Common myeloid progenitor, CD34-positive (primary cell): ENCODE measurements at regions of chr12 and their contacts with region 1.

Region 1: GRCh38 chr12:57124259-57124877 is 3.9 kb upstream of the LRP1 start:
- DNase-seq: peak; percentile 72 to 87 (median 82)
- H3K4me3 ChIP-seq: no peak overlapping the region
- H3K27ac ChIP-seq: no peak overlapping the region
- H3K4me1 ChIP-seq: peaks cover 0 to 21% (median 18%) of the 10 kb centered on the region in 4 experiments
- H3K27me3 ChIP-seq: peaks cover 0 to 35% (median 11%) of the 10 kb centered on the region in 5 experiments

Region 2: DNA sequence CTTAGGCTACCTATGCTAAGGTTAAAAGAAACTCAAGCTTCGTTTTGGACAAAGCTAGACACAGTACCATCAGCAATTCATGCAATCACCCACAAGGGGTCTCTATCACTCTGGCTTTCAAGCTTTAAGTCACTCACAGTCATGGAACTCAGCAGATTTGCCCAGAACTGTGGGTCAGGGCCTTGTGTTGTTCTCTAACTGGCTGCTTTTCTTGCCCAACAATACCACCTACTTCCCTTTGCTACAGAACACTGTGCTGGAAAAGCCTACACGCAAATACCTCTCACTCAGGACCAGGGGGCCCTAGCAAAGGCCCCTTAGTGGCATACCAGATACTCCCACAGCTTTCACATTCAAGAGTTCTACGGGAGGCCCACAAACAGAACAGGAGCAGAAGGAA is 54.8 kb before region 1 on chr12:
- CTCF ChIA-PET with region 1: interaction called, 25 read pairs
- POLR2A ChIA-PET with region 1: no interaction called
- DNase-seq: peak; percentile 89 to 94 (median 93)
- H3K4me3 ChIP-seq: no peak overlapping the region
- H3K27ac ChIP-seq: peak overlapping the region in 1 of 2 experiments; percentile 68
- H3K4me1 ChIP-seq: peaks cover 0 to 9% (median 6%) of the 10 kb centered on the region in 4 experiments
- H3K27me3 ChIP-seq: no peaks in the 10 kb centered on the region

Region 3: GRCh38 chr12:57111031-57111734 is 13.2 kb before region 1 on chr12 and contains the start of gene STAT6:
- CTCF ChIA-PET with region 1: interaction called, 60 read pairs
- POLR2A ChIA-PET with region 1: no interaction called
- DNase-seq: peak; percentile 92 to 96 (median 94)
- H3K4me3 ChIP-seq: peak within 1 kb of the TSS; percentile 72 to 98 (median 90)
- H3K27ac ChIP-seq: peak within 1 kb of the TSS; percentile 85 to 95
- H3K4me1 ChIP-seq: peaks cover 6 to 37% (median 30%) of the 10 kb centered on the region in 4 experiments
- H3K27me3 ChIP-seq: no peaks in the 10 kb centered on the region

Region 4: DNA sequence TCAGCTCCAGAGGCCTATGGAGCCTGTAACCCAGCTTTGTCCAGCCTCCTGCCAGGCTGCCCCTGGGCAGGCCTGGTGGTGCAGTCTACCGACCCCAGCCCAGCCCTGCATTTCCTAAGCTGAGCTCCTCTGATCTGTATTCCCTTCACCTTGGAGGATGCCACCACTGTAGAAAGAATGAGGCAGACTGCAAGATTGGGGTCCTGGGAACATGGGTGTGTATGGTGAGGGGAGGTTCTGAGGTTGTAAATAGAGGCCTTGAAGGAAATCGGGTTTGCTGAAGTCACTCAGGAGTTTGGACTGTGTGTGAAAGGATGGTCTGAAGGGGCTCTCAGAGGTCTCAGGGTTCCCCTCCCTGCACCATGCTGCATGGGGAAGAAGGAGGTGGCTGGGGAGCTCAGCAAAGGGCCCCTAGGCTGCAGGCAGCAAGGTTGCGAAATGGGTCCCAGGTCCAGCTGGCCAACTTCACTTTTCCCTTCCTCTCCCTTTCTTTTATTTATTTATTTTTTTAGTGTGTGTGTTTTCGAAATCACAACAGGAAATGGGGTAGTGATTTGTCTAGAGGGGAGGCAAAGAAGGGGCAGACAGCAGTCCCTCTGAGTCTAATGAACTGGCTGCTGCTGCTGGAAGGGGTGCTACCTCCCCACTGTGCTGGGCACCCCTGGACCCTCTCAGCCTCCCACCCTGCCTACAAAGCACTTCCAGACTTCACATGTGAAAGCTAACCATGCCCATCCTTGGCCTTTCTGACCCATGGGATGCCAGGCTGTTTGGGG is 24.3 kb after region 1 on chr12:
- CTCF ChIA-PET with region 1: interaction called, 12 read pairs
- POLR2A ChIA-PET with region 1: interaction called, 4 read pairs
- DNase-seq: no peak
- H3K4me3 ChIP-seq: no peak overlapping the region
- H3K27ac ChIP-seq: no peak overlapping the region
- H3K4me1 ChIP-seq: peaks cover 0 to 39% (median 14%) of the 10 kb centered on the region in 4 experiments
- H3K27me3 ChIP-seq: no peaks in the 10 kb centered on the region

Region 5: DNA sequence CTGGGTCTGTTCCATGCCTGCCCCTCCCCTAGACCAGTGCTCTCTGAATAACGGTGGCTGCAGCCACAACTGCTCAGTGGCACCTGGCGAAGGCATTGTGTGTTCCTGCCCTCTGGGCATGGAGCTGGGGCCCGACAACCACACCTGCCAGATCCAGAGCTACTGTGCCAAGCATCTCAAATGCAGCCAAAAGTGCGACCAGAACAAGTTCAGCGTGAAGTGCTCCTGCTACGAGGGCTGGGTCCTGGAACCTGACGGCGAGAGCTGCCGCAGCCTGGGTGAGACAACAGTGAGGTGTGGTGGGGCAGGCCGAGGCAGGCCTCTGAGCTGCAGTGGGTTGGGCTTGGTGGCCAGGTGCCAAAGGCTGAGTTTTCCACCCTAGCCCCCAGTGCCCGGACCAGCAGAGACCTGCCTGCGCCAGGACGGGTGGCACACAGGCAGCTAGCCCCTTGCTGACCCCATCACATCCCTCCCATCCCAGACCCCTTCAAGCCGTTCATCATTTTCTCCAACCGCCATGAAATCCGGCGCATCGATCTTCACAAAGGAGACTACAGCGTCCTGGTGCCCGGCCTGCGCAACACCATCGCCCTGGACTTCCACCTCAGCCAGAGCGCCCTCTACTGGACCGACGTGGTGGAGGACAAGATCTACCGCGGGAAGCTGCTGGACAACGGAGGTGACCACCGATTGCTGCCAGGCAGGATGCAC is 51.2 kb after region 1 on chr12:
- CTCF ChIA-PET with region 1: interaction called, 399 read pairs
- POLR2A ChIA-PET with region 1: interaction called, 3 read pairs
- DNase-seq: peak; percentile 18 to 50 (median 33)
- H3K4me3 ChIP-seq: no peak overlapping the region
- H3K27ac ChIP-seq: no peak overlapping the region
- H3K4me1 ChIP-seq: no peaks in the 10 kb centered on the region
- H3K27me3 ChIP-seq: peaks cover 0 to 1% (median 0%) of the 10 kb centered on the region in 5 experiments

Region 6: GRCh38 chr12:57213058-57213715 is 88.8 kb after region 1 on chr12:
- CTCF ChIA-PET with region 1: interaction called, 10 read pairs
- POLR2A ChIA-PET with region 1: no interaction called
- DNase-seq: peak; percentile 84 to 89 (median 87)
- H3K4me3 ChIP-seq: no peak overlapping the region
- H3K27ac ChIP-seq: no peak overlapping the region
- H3K4me1 ChIP-seq: peaks cover 0 to 20% (median 13%) of the 10 kb centered on the region in 4 experiments
- H3K27me3 ChIP-seq: peaks cover 9 to 47% (median 35%) of the 10 kb centered on the region in 5 experiments